ENCODE measurements at regions of chr14 and their contacts with region 1.

Region 1: GRCh38 chr14:101761032-101761880 is at the start of gene PPP2R5C:
- DNase-seq: peak; percentile 55 to 94
- H3K4me3 ChIP-seq: peak within 1 kb of the TSS; percentile 86 to 94
- H3K27ac ChIP-seq: peak within 1 kb of the TSS; percentile 84 to 85
- H3K4me1 ChIP-seq: peaks cover 0 to 5% of the 10 kb centered on the region in 2 donors
- H3K27me3 ChIP-seq: no peaks in the 10 kb centered on the region
- CTCF ChIP-seq: no peak
- total RNA-seq, gene PPP2R5C: 45.6 TPM

Region 2: GRCh38 chr14:100547633-100548294 is 1213.5 kb before region 1 on chr14:
- intact Hi-C with region 1: loop called (anchors 2 kb)
- DNase-seq: peak in 1 of 2 donors; percentile 76
- H3K4me3 ChIP-seq: no peak overlapping the region
- H3K27ac ChIP-seq: peak overlapping the region in 1 of 2 donors; percentile 33
- H3K4me1 ChIP-seq: peaks cover 0 to 8% of the 10 kb centered on the region in 2 donors
- H3K27me3 ChIP-seq: no peaks in the 10 kb centered on the region
- CTCF ChIP-seq: no peak

Region 3: GRCh38 chr14:101947906-101948665 is 186.8 kb after region 1 on chr14:
- intact Hi-C with region 1: loop called (anchors 1 kb)
- DNase-seq: peak; percentile 100
- H3K4me3 ChIP-seq: peak overlapping the region; percentile 71 to 96
- H3K27ac ChIP-seq: peak overlapping the region; percentile 90 to 93
- H3K4me1 ChIP-seq: peaks cover 7 to 10% of the 10 kb centered on the region in 2 donors
- H3K27me3 ChIP-seq: no peaks in the 10 kb centered on the region
- CTCF ChIP-seq: no peak

Region 4: DNA sequence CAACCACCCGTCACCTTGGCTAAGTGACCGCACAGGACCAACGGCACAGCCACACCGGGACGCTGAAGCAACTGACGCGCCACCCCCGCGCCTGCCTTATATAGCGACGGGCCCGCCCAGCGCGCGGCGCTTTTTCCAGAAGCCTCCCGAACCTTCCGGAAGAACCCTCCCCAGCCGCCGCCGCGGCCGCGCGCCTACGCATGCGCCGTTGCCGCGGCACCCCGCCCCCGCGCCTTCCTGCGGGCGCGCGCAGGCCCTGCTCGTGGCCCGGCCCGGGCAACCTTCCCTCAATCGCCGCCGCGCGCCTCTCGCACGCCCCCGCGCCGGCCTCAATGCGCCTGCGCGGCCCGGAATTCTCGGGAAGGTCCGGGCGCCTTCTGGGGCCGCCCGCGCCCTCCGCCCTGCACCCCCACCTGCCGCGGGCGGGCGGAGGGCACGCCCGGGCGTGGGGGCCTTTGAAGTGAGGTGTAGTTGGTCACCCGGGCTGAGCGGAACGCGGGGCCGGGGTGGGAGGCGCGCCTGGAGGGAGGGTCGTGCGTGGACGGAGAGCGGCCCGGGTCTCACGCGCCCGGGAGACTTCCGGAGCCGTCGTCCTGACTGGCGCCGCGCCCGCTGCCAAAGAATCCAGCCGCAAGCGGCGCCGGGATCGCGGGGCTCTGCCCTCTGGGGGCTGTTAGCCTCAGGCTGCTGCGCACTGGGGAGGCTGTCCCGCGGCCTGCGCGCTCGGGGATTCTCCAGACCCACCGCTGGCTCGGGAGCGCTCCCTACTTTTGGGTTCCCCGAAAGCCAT is 325.9 kb after region 1 on chr14 and contains the start of gene HSP90AA1:
- intact Hi-C with region 1: loop called (anchors 2 kb)
- DNase-seq: peak; percentile 75 to 96
- H3K4me3 ChIP-seq: peak within 1 kb of the TSS; percentile 89 to 97
- H3K27ac ChIP-seq: peak within 1 kb of the TSS; percentile 98 to 100
- H3K4me1 ChIP-seq: peaks cover 13 to 37% of the 10 kb centered on the region in 2 donors
- H3K27me3 ChIP-seq: no peaks in the 10 kb centered on the region
- CTCF ChIP-seq: peak in 2 of 3 experiments; percentile 19 to 29
- total RNA-seq, gene HSP90AA1: 120 TPM

Region 5: DNA sequence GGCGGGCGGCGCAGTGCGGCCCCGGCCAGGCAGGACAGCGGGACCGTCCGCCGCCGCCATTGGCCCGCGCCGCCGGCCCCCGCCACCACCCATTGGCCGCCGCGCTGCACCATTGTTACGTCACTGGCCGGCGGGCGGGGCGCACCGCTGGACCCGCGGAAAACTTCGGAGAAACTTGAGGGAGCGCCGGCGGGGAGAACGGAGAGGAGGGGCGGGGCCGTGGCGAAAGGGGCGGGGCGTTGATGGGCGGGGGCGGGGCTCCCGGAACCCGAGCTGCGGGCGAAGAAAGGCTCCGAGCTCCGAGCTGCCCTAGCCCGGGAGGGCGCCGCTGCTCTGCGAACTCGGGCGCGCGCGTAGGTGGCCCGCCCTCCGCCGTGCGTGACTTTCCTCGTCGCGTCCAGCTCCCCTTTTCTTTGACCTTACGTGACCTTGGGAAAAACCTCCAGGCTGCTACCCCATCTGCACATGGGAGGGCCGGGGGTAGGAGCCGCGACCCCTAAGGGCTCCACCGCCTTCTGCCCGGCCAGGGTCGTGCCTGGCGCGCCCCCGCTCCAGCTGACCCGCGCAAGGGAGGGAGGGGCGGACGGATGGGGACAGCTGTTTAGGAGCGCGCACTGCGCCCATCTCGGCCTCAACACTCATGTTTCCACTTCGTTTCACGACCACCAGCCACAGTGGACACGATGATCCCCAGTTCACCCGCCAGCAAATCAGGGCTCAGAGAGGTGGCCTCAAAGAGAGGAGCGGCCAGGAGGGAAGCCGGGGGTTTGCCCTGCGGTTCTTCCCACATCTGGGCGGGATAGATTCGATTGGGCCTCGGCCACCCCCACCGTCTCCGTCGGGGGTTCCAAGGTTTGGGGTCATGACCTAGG is 748.7 kb after region 1 on chr14 and contains the start of gene ANKRD9:
- intact Hi-C with region 1: loop called (anchors 5 kb)
- DNase-seq: peak; percentile 79 to 97
- H3K4me3 ChIP-seq: peak within 1 kb of the TSS; percentile 71 to 87
- H3K27ac ChIP-seq: peak within 1 kb of the TSS; percentile 78 to 92
- H3K4me1 ChIP-seq: peaks cover 8% of the 10 kb centered on the region in 2 donors
- H3K27me3 ChIP-seq: no peaks in the 10 kb centered on the region
- CTCF ChIP-seq: no peak
- total RNA-seq, gene ANKRD9: 118 TPM